MCF 10A (cell line): ENCODE measurements at regions of chr10 and their contacts with region 1.

Region 1: GRCh38 chr10:100046021-100046486 is 35.6 kb downstream of the CPN1 start:
- DNase-seq: peak; percentile 82
- H3K4me3 Mint-ChIP-seq: no peak overlapping the region
- H3K27ac Mint-ChIP-seq: no peak overlapping the region
- H3K4me1 Mint-ChIP-seq: peaks cover 19% of the 10 kb centered on the region
- H3K27me3 Mint-ChIP-seq: no peaks in the 10 kb centered on the region
- CTCF ChIP-seq: peak; percentile 90

Region 2: GRCh38 chr10:99854860-99855259 is 191.2 kb before region 1 on chr10:
- CTCF ChIA-PET with region 1: interaction called, 175 read pairs
- POLR2A ChIA-PET with region 1: interaction called, 4 read pairs
- intact Hi-C with region 1: no loop called
- DNase-seq: no peak
- H3K4me3 Mint-ChIP-seq: no peak overlapping the region
- H3K27ac Mint-ChIP-seq: no peak overlapping the region
- H3K4me1 Mint-ChIP-seq: no peaks in the 10 kb centered on the region
- H3K27me3 Mint-ChIP-seq: no peaks in the 10 kb centered on the region
- CTCF ChIP-seq: no peak

Region 3: DNA sequence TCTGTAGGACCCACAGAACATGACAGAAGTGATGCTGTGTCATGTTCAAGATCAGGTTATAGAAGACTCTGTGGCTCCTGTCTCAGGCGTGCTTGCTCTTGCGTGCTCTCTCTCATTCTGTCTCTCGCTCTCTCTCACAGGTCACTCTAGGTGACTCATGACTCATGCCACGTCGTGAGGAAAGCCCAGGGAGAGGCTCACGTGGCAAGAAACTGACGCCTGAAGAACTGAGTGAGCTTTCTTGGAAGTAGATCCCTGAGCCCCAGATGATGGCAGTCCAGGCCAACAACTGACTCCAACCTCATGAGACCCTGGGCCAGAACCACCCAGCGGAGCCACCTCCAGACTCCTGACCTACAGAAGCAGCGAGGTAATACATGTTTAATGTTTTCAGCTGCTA is 139.6 kb before region 1 on chr10:
- CTCF ChIA-PET with region 1: interaction called, 125 read pairs
- POLR2A ChIA-PET with region 1: interaction called, 30 read pairs
- intact Hi-C with region 1: loop called (anchors 1 kb)
- DNase-seq: peak; percentile 96
- H3K4me3 Mint-ChIP-seq: no peak overlapping the region
- H3K27ac Mint-ChIP-seq: peak overlapping the region; percentile 80
- H3K4me1 Mint-ChIP-seq: peaks cover 14% of the 10 kb centered on the region
- H3K27me3 Mint-ChIP-seq: no peaks in the 10 kb centered on the region
- CTCF ChIP-seq: peak; percentile 38

Region 4: GRCh38 chr10:99966306-99966705 is 79.7 kb before region 1 on chr10:
- CTCF ChIA-PET with region 1: interaction called, 37 read pairs
- POLR2A ChIA-PET with region 1: interaction called, 11 read pairs
- intact Hi-C with region 1: no loop called
- DNase-seq: peak; percentile 78
- H3K4me3 Mint-ChIP-seq: no peak overlapping the region
- H3K27ac Mint-ChIP-seq: peak overlapping the region; percentile 49
- H3K4me1 Mint-ChIP-seq: peaks cover 12% of the 10 kb centered on the region
- H3K27me3 Mint-ChIP-seq: no peaks in the 10 kb centered on the region
- CTCF ChIP-seq: no peak

Region 5: GRCh38 chr10:99983280-99983988 is 62.6 kb before region 1 on chr10:
- CTCF ChIA-PET with region 1: interaction called, 55 read pairs
- POLR2A ChIA-PET with region 1: interaction called, 56 read pairs
- intact Hi-C with region 1: no loop called
- DNase-seq: no peak
- H3K4me3 Mint-ChIP-seq: no peak overlapping the region
- H3K27ac Mint-ChIP-seq: peak overlapping the region; percentile 85
- H3K4me1 Mint-ChIP-seq: peaks cover 23% of the 10 kb centered on the region
- H3K27me3 Mint-ChIP-seq: no peaks in the 10 kb centered on the region
- CTCF ChIP-seq: no peak

Region 6: DNA sequence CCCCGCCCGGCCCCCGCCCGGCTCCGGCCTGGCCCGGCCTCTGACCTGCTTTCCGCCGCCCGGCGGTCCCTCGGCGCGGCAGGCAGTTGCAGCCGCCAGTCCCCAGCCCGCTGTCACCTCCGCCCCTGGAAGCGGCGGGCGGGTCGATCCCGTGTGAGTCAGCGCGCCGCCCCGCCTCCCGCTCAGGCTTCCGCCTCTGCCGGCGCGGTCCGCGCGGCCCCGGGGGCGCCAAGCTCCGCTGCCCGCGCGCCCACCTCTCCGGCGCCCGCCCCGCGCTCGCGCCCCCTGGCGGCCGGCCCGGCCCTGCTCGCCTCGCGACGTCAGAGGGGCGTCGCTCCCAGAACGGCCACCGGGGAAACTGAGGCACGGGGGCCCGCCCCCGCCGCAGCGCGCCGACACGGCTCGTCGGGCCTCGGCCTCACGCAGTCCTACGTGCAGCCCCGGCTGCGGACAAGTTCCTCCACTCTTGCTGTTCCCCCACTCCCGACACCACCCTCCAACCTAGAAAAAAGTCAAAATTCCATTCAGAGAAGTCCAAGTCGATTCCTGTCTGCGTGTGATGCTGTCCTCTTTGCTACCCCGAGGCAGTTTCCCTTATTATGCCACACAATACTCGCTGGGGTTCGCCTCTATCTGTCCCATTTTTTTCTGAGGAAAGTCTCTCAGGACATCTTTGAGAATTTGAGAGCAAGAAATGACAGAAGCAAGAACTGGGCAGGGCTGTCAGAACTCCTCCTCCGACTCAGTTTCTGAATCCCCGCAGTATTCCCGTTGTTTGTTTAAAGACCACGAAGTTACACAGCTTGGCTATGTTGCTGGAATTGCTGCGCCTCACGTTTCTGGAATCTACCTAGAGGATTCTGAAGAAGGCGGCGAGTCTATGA is 36.0 kb before region 1 on chr10 and contains the start of gene DNMBP:
- CTCF ChIA-PET with region 1: interaction called, 92 read pairs
- POLR2A ChIA-PET with region 1: interaction called, 179 read pairs
- intact Hi-C with region 1: loop called (anchors 2 kb)
- DNase-seq: peak; percentile 76
- H3K4me3 Mint-ChIP-seq: peak within 1 kb of the TSS; percentile 94
- H3K27ac Mint-ChIP-seq: peak within 1 kb of the TSS; percentile 84
- H3K4me1 Mint-ChIP-seq: peaks cover 39% of the 10 kb centered on the region
- H3K27me3 Mint-ChIP-seq: no peaks in the 10 kb centered on the region
- CTCF ChIP-seq: peak; percentile 32
- total RNA-seq, gene DNMBP: 11.3 and 14.3 TPM in 2 replicates

Region 7: GRCh38 chr10:100185364-100186252 is 139.6 kb after region 1 on chr10 and contains the start of gene ERLIN1:
- CTCF ChIA-PET with region 1: interaction called, 6 read pairs
- POLR2A ChIA-PET with region 1: interaction called, 4 read pairs
- intact Hi-C with region 1: loop called (anchors 10 kb)
- DNase-seq: peak; percentile 94
- H3K4me3 Mint-ChIP-seq: peak within 1 kb of the TSS; percentile 94
- H3K27ac Mint-ChIP-seq: peak within 1 kb of the TSS; percentile 90
- H3K4me1 Mint-ChIP-seq: peaks cover 31% of the 10 kb centered on the region
- H3K27me3 Mint-ChIP-seq: no peaks in the 10 kb centered on the region
- CTCF ChIP-seq: no peak
- total RNA-seq, gene ERLIN1: 38.0 and 42.9 TPM in 2 replicates

Region 8: DNA sequence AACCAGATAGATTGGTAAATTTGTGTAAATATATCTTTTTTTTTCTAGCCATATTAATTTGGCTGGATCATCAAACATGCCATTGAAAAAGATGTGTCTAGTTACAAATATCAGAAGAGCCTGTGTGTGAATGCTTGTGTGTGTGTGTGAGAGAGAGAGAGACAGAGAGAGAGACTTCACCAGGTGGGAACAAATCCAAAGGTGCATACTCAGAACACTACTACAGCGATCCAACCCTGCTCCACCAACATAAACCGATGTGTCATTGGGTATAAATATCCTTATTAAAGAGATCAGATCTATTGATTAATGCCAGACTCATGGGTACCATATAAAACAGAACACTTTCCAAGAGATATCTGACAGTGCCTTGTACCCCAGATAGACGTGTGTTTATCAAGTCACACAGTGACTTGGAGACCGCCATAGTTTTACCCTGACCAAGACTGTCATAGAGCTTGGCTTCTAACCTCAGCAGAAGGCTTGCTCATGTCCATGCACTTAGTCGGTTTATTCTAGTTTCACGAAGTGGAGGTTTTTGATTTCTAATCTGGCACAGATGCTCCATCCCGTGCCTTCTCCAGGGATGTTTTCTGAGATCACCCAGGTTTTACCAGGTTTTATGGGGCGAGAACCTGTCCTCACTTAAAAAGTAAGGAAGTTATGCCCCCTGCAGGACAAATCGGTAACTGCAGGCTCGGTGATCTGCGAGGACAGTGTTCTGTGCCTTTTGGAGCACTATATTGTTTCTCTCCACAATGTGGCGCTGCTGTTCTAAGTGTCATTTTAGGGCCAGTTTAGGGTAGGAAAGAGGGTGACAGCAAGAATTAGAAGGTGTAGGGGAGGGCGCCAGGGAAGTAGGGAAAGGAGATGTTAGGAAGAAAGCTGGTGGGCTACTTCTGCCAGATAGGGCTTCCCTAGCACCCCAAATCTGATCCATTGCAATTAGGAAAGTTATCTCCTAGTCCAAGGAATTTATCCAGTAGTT is 387.5 kb after region 1 on chr10:
- CTCF ChIA-PET with region 1: no interaction called
- POLR2A ChIA-PET with region 1: no interaction called
- intact Hi-C with region 1: no loop called
- DNase-seq: peak; percentile 93
- H3K4me3 Mint-ChIP-seq: no peak overlapping the region
- H3K27ac Mint-ChIP-seq: no peak overlapping the region
- H3K4me1 Mint-ChIP-seq: peaks cover 6% of the 10 kb centered on the region
- H3K27me3 Mint-ChIP-seq: no peaks in the 10 kb centered on the region
- CTCF ChIP-seq: peak; percentile 96